ENCODE measurements at regions of chr7 and their contacts with region 1.

Region 1: GRCh38 chr7:152463709-152464311 is 28.0 kb upstream of the KMT2C start:
- DNase-seq: peak; percentile 98
- ATAC-seq: peak; percentile 81
- H3K4me3 ChIP-seq: peak overlapping the region; percentile 91
- H3K27ac ChIP-seq: peak overlapping the region; percentile 85
- H3K4me1 ChIP-seq: peaks cover 12% of the 10 kb centered on the region; the same call in 1 of the 2 replicates
- H3K27me3 ChIP-seq: no peaks in the 10 kb centered on the region
- CTCF ChIP-seq: no peak

Region 2: DNA sequence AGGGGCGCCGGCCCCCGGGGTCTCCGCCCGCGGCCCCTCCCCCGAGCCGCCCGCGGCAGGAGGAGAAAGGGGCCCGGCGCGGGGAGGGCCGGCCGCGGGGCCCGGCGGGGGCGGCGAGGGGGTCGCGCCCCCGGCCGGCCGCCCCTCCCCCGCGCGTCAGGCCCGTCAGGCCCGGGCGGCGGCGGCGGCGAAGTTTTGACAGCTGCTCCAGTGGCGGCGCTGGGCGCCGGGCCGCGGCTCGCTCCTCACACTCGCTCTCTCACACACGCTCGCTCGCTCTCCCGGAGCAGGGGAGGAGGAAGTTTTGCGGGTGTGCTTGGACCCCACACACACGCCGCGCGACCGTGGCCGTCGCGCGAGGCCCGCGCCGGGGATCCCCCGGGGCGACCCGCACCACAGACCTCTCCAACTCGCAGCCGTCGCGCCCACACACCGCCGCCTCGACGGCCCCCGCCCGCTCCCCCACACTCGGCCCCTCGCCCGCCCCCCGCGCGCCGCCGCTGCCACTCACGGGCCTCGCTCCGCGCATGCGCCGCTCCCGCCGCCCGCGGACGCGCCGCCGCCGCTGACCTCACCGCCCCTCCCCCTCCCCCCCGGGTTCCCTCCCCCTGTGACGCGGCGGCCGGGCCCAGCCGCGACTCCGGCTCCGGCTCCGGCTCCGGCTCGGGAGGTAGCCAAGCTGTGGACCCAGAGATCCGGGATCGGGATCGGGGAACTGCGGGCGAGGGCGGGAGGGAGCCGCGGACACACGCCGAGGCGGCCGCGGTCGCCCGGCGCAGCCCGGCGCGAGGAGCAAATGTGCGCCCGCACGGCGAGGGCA is 27.5 kb before region 1 on chr7:
- CTCF ChIA-PET with region 1: no interaction called
- POLR2A ChIA-PET with region 1: no interaction called
- intact Hi-C with region 1: loop called (anchors 1 kb)
- DNase-seq: peak; percentile 89
- ATAC-seq: peak; percentile 62
- H3K4me3 ChIP-seq: peak overlapping the region; percentile 74
- H3K27ac ChIP-seq: peak overlapping the region; percentile 46; the same call in 1 of the 2 replicates
- H3K4me1 ChIP-seq: no peaks in the 10 kb centered on the region; the same call in 1 of the 2 replicates
- H3K27me3 ChIP-seq: no peaks in the 10 kb centered on the region
- CTCF ChIP-seq: no peak

Region 3: GRCh38 chr7:152675759-152676636 is 212.2 kb after region 1 on chr7 and contains the start of gene XRCC2:
- CTCF ChIA-PET with region 1: no interaction called
- POLR2A ChIA-PET with region 1: no interaction called
- intact Hi-C with region 1: loop called (anchors 10 kb)
- DNase-seq: peak; percentile 89
- ATAC-seq: peak; percentile 93
- H3K4me3 ChIP-seq: peak within 1 kb of the TSS; percentile 92
- H3K27ac ChIP-seq: peak within 1 kb of the TSS; percentile 59
- H3K4me1 ChIP-seq: peaks cover 7% of the 10 kb centered on the region
- H3K27me3 ChIP-seq: no peaks in the 10 kb centered on the region
- CTCF ChIP-seq: no peak
- total RNA-seq, gene XRCC2: 13.6 and 18.7 TPM in 2 replicates

Region 4: GRCh38 chr7:152709287-152710152 is 245.7 kb after region 1 on chr7:
- CTCF ChIA-PET with region 1: interaction called, 4 read pairs
- POLR2A ChIA-PET with region 1: no interaction called
- intact Hi-C with region 1: loop called (anchors 10 kb)
- DNase-seq: peak; percentile 44
- ATAC-seq: no peak
- H3K4me3 ChIP-seq: no peak overlapping the region
- H3K27ac ChIP-seq: no peak overlapping the region
- H3K4me1 ChIP-seq: peaks cover 21% of the 10 kb centered on the region
- H3K27me3 ChIP-seq: no peaks in the 10 kb centered on the region
- CTCF ChIP-seq: no peak

Region 5: GRCh38 chr7:152759949-152760853 is 296.4 kb after region 1 on chr7:
- CTCF ChIA-PET with region 1: no interaction called
- POLR2A ChIA-PET with region 1: no interaction called
- intact Hi-C with region 1: loop called (anchors 1 kb)
- DNase-seq: peak; percentile 25
- ATAC-seq: peak; percentile 54
- H3K4me3 ChIP-seq: peak overlapping the region; percentile 90
- H3K27ac ChIP-seq: peak overlapping the region; percentile 90
- H3K4me1 ChIP-seq: peaks cover 14% of the 10 kb centered on the region
- H3K27me3 ChIP-seq: no peaks in the 10 kb centered on the region
- CTCF ChIP-seq: no peak

Measured in PC-3 (cell line).